ENCODE measurements at regions of chr11 and their contacts with region 1.

Region 1: GRCh38 chr11:67401495-67402191 is at the start of gene PPP1CA:
- DNase-seq: peak; percentile 91
- H3K4me3 Mint-ChIP-seq: peak within 1 kb of the TSS; percentile 72
- H3K27ac Mint-ChIP-seq: peak within 1 kb of the TSS; percentile 92
- H3K4me1 Mint-ChIP-seq: peaks cover 60% of the 10 kb centered on the region
- H3K27me3 Mint-ChIP-seq: no peaks in the 10 kb centered on the region
- total RNA-seq, gene PPP1CA: 202 to 204 TPM

Region 2: GRCh38 chr11:67345920-67346799 is 55.5 kb before region 1 on chr11:
- CTCF ChIA-PET with region 1: interaction called, 13 read pairs
- intact Hi-C with region 1: no loop called
- DNase-seq: peak; percentile 59
- H3K4me3 Mint-ChIP-seq: no peak overlapping the region
- H3K27ac Mint-ChIP-seq: peak overlapping the region; percentile 90
- H3K4me1 Mint-ChIP-seq: peaks cover 60% of the 10 kb centered on the region
- H3K27me3 Mint-ChIP-seq: no peaks in the 10 kb centered on the region

Region 3: DNA sequence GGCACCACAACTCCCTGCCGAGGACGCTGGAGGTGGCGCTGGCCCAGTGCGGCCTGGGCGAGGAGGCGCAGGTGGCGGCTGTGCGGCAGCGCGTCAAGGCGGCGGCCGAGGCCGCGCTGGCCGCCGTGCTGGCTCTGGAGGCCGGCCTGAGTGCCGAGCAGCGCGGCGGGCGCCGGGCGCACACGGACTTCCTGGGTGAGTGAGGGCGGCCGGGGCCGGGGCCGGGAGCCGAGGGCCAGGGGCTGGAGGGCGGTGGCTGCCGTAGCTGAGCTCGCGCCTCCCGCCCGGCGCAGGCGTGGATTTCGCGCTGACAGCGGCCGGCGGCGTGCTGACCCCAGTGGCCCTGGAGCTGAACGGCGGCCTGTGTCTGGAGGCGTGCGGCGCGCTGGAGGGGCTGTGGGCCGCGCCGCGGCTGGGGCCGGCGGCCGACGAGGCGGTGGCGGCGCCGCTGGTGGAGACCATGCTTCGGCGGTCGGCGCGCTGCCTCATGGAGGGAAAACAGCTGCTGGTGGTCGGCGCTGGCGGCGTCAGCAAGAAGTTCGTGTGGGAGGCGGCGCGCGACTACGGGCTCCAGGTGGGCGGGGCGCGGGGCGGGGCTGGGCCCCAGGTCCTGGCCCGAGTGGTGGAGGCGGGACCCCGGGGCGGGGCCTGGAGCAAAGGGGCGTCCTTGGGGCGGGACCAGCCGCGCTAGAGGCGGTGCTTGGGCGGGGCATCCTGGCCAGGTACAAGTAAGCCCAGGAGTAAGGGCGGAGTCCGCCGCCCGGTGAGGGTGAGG is 19.2 kb after region 1 on chr11:
- CTCF ChIA-PET with region 1: interaction called, 28 read pairs
- intact Hi-C with region 1: loop called (anchors 1 kb)
- DNase-seq: peak; percentile 97
- H3K4me3 Mint-ChIP-seq: peak overlapping the region; percentile 77
- H3K27ac Mint-ChIP-seq: peak overlapping the region; percentile 50
- H3K4me1 Mint-ChIP-seq: peaks cover 46% of the 10 kb centered on the region
- H3K27me3 Mint-ChIP-seq: no peaks in the 10 kb centered on the region

Region 4: GRCh38 chr11:67439321-67439883 is 37.8 kb after region 1 on chr11:
- CTCF ChIA-PET with region 1: interaction called, 18 read pairs
- intact Hi-C with region 1: loop called (anchors 1 kb)
- DNase-seq: peak; percentile 77
- H3K4me3 Mint-ChIP-seq: peak overlapping the region; percentile 90
- H3K27ac Mint-ChIP-seq: peak overlapping the region; percentile 95
- H3K4me1 Mint-ChIP-seq: peaks cover 55% of the 10 kb centered on the region
- H3K27me3 Mint-ChIP-seq: no peaks in the 10 kb centered on the region

Region 5: GRCh38 chr11:67482825-67483798 is 81.5 kb after region 1 on chr11 and contains the start of gene AIP:
- CTCF ChIA-PET with region 1: interaction called, 5 read pairs
- intact Hi-C with region 1: loop called (anchors 1 kb)
- DNase-seq: peak; percentile 99
- H3K4me3 Mint-ChIP-seq: peak within 1 kb of the TSS; percentile 94
- H3K27ac Mint-ChIP-seq: peak within 1 kb of the TSS; percentile 99
- H3K4me1 Mint-ChIP-seq: peaks cover 34% of the 10 kb centered on the region
- H3K27me3 Mint-ChIP-seq: no peaks in the 10 kb centered on the region
- total RNA-seq, gene AIP: 163 to 166 TPM